ENCODE measurements at regions of chr6 and their contacts with region 1.

Region 1: GRCh38 chr6:125789576-125790357 is 993 bp upstream of the NCOA7 start:
- DNase-seq: peak; percentile 43
- CTCF ChIP-seq: no peak

Region 2: DNA sequence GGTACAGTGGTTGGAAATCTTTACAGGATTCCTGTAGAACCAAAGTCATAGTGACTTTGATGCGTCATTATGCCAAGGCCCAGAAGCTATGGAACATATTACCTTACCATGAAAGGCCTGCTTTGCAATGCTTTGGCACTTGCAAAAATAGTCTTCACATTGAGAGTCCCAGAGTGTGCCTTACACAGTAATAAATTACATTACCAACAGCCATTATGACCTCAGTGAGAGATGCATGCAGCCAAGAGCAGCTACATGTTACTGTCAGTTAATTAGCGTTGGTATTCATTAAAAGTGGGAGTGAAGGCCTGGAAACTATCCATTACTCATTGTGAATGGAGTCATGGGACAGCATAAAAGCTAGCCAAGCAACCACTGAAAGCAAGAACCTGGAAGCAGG is 448.8 kb before region 1 on chr6:
- in situ Hi-C with region 1: no loop called
- DNase-seq: no peak
- CTCF ChIP-seq: no peak

Region 3: DNA sequence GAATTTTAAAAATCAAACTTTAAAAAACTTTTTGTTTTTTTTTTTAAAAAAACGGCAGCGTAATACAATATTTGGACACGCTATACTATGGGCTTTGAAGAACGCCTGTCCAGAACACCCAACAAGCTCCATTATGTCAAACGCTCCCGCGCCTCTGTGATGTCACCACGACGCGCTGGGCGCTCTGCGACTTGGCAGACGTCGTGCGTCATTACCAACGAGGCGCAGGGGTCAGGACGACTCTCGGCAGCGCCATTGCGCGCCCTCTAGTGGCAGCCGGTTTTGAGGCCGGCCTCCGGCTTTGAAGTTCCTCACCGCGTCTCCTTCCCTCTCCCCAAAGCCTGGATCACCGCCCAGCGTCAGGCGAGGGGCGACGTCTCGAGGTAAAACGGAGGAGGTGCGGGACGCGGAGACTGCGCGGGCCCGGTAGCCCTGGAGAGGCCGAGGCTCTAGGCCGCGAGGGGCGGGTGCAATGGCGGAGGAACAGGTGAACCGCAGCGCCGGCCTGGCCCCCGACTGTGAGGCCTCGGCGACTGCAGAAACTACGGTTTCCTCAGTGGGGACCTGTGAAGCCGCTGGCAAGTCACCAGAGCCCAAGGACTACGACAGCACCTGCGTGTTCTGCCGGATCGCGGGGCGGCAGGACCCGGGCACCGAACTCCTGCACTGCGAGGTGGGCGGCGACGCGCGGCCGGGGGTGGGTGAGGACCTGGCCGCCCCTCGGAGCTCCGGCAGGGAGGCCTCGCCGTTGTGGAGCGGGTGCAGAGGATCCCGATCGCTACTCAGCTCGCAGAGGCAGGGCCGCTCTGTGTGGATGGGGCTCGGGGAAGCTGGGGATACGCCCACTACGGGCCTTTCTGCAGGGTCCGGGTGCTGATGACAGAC is 167.0 kb after region 1 on chr6 and contains the start of gene HINT3:
- in situ Hi-C with region 1: loop called (anchors 5 kb)
- DNase-seq: peak; percentile 95
- CTCF ChIP-seq: peak; percentile 91

Region 4: GRCh38 chr6:126112144-126112632 is 322.4 kb after region 1 on chr6:
- in situ Hi-C with region 1: no loop called
- DNase-seq: no peak
- CTCF ChIP-seq: no peak